ENCODE measurements at regions of chr18 and their contacts with region 1.

Region 1: GRCh38 chr18:2368102-2368501 is 203.2 kb downstream of the METTL4 start:
- DNase-seq: no peak
- H3K4me3 ChIP-seq: no peak overlapping the region
- H3K27ac ChIP-seq: no peak overlapping the region
- H3K4me1 ChIP-seq: no peaks in the 10 kb centered on the region
- H3K27me3 ChIP-seq: no peaks in the 10 kb centered on the region
- CTCF ChIP-seq: no peak

Region 2: DNA sequence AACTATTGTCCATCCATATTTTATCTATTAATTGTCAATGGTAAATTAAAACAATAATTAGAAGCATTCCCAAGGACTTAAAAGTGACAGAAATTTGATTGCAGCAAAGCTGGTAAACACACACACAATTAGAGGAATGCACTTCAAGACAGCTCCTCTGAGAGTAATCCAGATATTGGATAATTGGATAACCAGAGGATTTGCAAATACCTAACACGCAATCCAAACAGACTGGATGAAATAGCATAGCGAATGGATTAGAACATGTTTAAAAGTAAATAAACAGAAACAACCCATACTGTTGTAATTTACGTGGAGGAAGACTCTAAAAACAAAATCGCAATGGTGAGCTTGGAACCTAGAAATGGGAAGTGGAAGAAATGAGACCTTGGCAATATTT is 36.6 kb before region 1 on chr18:
- CTCF ChIA-PET with region 1: no interaction called
- dilution Hi-C with region 1: loop called (anchors 5 kb)
- in situ Hi-C with region 1: no loop called
- intact Hi-C with region 1: no loop called
- DNase-seq: no peak
- H3K4me3 ChIP-seq: no peak overlapping the region
- H3K27ac ChIP-seq: no peak overlapping the region
- H3K4me1 ChIP-seq: no peaks in the 10 kb centered on the region
- H3K27me3 ChIP-seq: no peaks in the 10 kb centered on the region
- CTCF ChIP-seq: no peak

Region 3: DNA sequence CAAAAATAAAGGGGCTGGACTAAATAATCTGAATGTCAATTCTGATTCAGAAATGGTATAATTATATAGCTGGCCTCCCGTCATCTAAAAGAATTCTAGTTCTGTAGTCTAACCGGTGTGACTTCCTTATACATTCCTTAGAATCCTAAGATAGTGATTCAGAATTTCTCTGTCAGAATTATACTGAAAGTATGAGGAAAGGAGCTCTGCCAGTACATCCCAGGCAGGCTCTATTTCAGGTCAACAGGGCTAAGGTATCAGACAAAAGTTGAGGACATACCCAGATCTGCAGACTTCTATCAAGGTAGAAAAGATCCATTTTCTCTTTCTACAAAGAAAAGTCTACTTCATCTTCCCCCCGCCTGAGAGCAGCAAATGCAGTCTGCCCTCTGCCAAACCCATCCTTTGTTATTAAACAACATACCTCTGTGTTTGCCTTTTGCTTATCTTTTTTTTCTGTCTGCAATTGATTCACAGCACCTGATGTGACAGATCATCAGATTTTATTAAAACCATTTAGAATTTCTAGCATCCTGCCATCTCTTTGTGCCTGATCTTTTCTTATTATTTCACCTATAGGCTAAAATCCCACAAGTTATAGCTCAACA is 74.8 kb after region 1 on chr18:
- CTCF ChIA-PET with region 1: no interaction called
- dilution Hi-C with region 1: loop called (anchors 5 kb)
- in situ Hi-C with region 1: no loop called
- intact Hi-C with region 1: no loop called
- DNase-seq: peak; percentile 35
- H3K4me3 ChIP-seq: no peak overlapping the region
- H3K27ac ChIP-seq: no peak overlapping the region
- H3K4me1 ChIP-seq: peaks cover 7% of the 10 kb centered on the region
- H3K27me3 ChIP-seq: no peaks in the 10 kb centered on the region
- CTCF ChIP-seq: no peak

Region 4: DNA sequence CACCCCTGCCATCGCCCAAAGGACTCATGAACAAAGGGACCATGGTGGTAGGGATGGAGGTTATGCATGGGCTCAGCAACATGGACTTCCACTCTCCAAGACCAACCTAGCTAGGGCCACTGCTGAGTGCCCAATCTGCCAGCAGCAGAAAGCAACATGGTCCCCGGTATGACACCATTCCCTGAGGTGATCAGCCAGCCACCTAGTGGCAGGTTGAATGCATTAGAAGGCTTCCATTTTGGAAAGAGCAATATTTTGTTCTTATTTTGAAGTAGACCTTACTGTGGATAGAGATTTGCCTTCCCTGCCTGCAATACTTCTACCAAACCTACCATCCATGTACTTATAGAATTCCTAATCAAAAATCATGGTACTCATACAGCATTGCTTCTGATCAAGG is 103.4 kb after region 1 on chr18:
- CTCF ChIA-PET with region 1: no interaction called
- dilution Hi-C with region 1: loop called (anchors 5 kb)
- in situ Hi-C with region 1: no loop called
- intact Hi-C with region 1: no loop called
- DNase-seq: no peak
- H3K4me3 ChIP-seq: no peak overlapping the region
- H3K27ac ChIP-seq: no peak overlapping the region
- H3K4me1 ChIP-seq: no peaks in the 10 kb centered on the region
- H3K27me3 ChIP-seq: no peaks in the 10 kb centered on the region
- CTCF ChIP-seq: peak; percentile 20 to 32

Measured in mammary epithelial cell (primary cell).